ENCODE measurements at regions of chr1 and their contacts with region 1.

Region 1: GRCh38 chr1:192545896-192546521 is 29.6 kb upstream of the RGS1 start:
- DNase-seq: no peak
- H3K4me3 Mint-ChIP-seq: peak overlapping the region; percentile 30
- H3K27ac Mint-ChIP-seq: peak overlapping the region; percentile 46
- H3K4me1 Mint-ChIP-seq: peaks cover 60% of the 10 kb centered on the region
- H3K27me3 Mint-ChIP-seq: no peaks in the 10 kb centered on the region

Region 2: GRCh38 chr1:192530254-192530653 is 15.8 kb before region 1 on chr1:
- CTCF ChIA-PET with region 1: interaction called, 3 read pairs
- POLR2A ChIA-PET with region 1: interaction called, 3 read pairs
- intact Hi-C with region 1: loop called (anchors 1 kb)
- DNase-seq: no peak
- H3K4me3 Mint-ChIP-seq: no peak overlapping the region
- H3K27ac Mint-ChIP-seq: peak overlapping the region; percentile 47
- H3K4me1 Mint-ChIP-seq: peaks cover 27% of the 10 kb centered on the region
- H3K27me3 Mint-ChIP-seq: peaks cover 3% of the 10 kb centered on the region

Region 3: DNA sequence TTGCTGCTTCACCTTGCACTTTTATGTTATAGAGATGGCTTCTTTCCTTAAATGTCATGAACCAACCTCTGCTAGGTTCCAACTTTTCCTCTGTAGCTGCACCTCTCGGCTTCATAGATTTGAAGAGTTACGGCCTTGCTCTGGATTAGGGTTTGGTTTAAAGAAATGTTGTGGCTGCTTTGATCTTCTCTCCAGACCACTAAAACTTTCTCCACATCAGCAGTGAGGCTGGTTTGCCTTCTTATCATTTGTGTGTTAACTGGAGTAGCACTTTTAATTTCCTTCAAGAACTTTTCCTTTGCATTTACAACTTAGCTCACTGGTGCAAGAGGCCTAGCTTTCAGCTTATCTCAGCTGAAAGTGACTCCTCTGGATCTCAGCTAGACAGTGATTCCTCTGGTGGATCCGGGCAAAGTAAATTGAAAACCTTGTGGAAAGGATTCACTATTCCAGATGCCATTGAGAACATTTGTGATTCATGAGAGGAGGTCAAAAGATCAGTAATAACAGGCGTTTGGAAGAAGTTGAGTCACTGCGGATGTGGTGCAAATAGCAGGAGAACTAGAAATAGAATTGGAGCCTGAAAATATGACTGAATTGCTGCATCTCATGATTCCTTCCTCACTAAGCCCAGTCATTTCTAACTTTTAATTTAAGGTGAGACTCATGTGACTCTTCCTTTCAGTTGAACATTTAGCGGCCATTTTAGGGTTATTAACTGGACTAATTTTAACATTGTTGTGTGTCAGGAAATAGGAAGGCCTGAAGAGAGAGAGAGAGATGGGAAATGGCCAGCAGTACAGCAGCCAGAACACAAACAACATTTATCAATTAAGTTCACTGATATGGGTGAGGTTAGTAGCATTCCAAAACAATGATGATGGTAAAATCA is 13.4 kb after region 1 on chr1:
- CTCF ChIA-PET with region 1: no interaction called
- POLR2A ChIA-PET with region 1: interaction called, 6 read pairs
- intact Hi-C with region 1: loop called (anchors 1 kb)
- DNase-seq: peak; percentile 36
- H3K4me3 Mint-ChIP-seq: no peak overlapping the region
- H3K27ac Mint-ChIP-seq: peak overlapping the region; percentile 33
- H3K4me1 Mint-ChIP-seq: peaks cover 44% of the 10 kb centered on the region
- H3K27me3 Mint-ChIP-seq: no peaks in the 10 kb centered on the region

Region 4: DNA sequence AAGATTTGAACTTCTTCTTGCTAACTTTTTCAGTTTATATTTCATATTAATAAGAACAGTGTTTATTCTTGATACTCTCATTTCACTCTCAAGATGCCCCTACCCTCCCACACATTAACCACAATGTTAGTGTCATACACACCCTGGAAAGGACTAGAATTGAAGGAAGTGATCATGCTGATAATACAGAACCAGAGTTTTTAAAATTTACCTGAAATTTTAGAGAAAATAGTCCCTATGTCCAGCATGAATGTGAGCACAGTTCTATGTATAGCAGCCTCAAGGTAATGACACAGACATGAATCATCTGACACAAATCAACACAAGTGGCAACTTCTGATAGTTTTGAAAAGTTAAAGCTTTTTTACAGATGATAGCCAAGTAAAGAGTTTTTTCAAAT is 55.6 kb after region 1 on chr1:
- CTCF ChIA-PET with region 1: no interaction called
- POLR2A ChIA-PET with region 1: no interaction called
- intact Hi-C with region 1: loop called (anchors 1 kb)
- DNase-seq: no peak
- H3K4me3 Mint-ChIP-seq: no peak overlapping the region
- H3K27ac Mint-ChIP-seq: no peak overlapping the region
- H3K4me1 Mint-ChIP-seq: peaks cover 26% of the 10 kb centered on the region
- H3K27me3 Mint-ChIP-seq: no peaks in the 10 kb centered on the region

Region 5: DNA sequence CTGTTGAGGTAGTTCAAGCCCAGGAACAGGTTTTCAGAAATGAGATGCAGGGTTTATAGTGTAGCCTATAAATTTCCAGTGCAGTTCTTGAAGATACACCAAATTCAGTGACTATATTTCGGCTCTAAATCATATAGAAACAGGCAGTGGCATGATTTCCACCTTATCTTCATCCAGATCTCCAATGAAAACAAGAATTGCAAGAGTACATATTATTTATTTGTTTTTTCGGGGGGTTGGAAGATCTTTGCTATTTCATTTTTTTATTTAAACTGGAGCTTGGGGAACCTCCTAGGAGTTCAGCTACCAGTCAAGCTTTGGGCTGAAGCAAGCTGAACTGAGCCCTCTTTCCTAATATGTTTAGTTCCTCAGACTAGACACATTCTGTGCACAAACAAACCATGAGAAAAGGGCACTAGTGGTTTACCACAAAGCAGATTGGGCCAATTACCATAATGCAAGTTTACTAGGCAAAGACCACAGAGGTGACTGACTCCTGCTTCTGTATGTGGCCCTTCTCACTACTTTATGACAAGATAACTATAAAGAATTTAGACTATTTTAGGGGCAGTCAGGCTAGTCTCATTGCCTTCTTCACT is 331.4 kb after region 1 on chr1:
- CTCF ChIA-PET with region 1: no interaction called
- POLR2A ChIA-PET with region 1: no interaction called
- intact Hi-C with region 1: no loop called
- DNase-seq: no peak
- H3K4me3 Mint-ChIP-seq: no peak overlapping the region
- H3K27ac Mint-ChIP-seq: no peak overlapping the region
- H3K4me1 Mint-ChIP-seq: no peaks in the 10 kb centered on the region
- H3K27me3 Mint-ChIP-seq: no peaks in the 10 kb centered on the region

Region 6: DNA sequence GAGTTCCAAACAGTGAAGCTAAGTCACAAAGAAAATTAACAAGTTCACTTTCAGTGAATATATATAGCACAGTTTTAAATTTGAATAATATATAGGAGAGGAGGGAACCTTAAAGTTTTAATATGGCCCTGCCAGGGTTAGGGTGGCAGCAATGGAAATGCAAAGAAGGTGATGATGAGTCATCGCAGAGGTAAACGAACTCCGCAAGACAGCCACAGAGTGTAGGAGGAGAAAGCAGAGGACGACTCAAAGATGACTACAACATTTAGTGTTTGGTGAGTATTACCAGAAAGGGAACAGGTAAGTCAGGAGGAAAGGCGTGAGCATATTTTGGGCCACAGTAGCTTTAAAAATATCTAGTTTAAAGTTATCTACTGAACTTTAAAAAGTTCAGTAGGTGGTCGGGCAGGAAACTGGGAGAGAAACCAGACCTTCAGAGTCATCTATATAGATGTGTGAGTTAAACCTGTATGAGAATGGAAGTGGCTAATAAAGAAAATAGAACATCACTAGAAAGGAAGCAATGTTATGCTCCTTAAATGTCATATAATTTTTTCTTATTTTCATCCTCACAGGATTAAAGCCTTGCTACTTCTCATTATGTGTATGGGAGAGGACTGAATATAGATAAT is 437.5 kb after region 1 on chr1:
- CTCF ChIA-PET with region 1: no interaction called
- POLR2A ChIA-PET with region 1: no interaction called
- intact Hi-C with region 1: no loop called
- DNase-seq: peak; percentile 68
- H3K4me3 Mint-ChIP-seq: no peak overlapping the region
- H3K27ac Mint-ChIP-seq: peak overlapping the region; percentile 82
- H3K4me1 Mint-ChIP-seq: peaks cover 45% of the 10 kb centered on the region
- H3K27me3 Mint-ChIP-seq: no peaks in the 10 kb centered on the region

Measured in activated CD4-positive, alpha-beta memory T cell treated with anti-CD3 and anti-CD28 coated beads for 36 hours (primary cell).